Vagina (tissue), 2 donors: ENCODE measurements at regions of chr4 and their contacts with region 1.

Region 1: GRCh38 chr4:88706574-88706973 is 8.9 kb upstream of the NAP1L5 start:
- DNase-seq: no peak
- H3K4me3 ChIP-seq: no peak overlapping the region
- H3K27ac ChIP-seq: peak overlapping the region; percentile 34
- H3K4me1 ChIP-seq: peaks cover 16% of the 10 kb centered on the region
- H3K27me3 ChIP-seq: no peaks in the 10 kb centered on the region
- CTCF ChIP-seq: peak in 2 of 3 experiments; percentile 34 to 52
- POLR2A ChIP-seq: no peak

Region 2: DNA sequence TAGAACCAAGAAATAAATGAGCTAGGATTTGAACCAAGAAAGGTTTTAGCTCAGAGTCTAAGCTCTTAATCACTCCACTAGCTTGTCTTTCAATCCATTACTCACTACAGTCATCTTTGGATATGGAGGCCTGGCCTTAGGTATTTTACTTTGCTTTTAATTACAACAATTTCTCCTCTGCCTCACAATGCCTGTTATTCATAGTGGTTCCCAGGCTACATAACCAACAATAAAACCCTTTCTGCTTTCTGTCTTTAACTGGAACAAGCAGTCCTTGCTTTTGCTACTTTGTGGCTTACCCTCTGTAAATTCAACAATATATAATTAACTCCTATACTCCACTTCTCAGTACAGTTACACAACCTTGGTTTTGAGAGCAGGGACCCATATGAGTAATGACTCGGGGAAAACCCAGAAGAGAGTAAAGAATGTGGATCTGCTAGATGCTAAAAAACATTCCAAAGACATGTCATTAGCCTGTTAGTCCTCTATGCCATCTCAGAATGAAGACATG is 85.8 kb after region 1 on chr4:
- intact Hi-C with region 1: no loop called
- DNase-seq: no peak
- H3K4me3 ChIP-seq: no peak overlapping the region
- H3K27ac ChIP-seq: no peak overlapping the region
- H3K4me1 ChIP-seq: peaks cover 14% of the 10 kb centered on the region
- H3K27me3 ChIP-seq: no peaks in the 10 kb centered on the region
- CTCF ChIP-seq: no peak
- POLR2A ChIP-seq: no peak

Region 3: DNA sequence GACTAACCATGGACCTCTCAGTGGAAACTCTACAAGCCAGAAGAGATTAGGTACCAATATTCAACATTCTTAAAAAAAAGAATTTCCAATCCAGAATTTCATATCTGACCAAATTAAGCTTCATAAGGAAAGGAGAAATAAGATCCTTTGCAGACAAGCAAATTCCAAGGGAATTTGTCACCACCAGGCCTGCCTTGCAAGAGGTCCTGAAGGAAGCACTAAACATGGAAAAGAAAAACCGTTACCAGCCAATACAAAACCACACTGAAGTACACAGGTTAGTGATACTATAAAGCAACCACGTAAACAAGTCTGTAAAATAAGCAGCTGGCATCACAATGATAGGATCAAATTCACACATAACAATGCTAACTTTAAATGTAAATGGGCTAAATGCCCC is 193.9 kb after region 1 on chr4:
- intact Hi-C with region 1: no loop called
- DNase-seq: no peak
- H3K4me3 ChIP-seq: no peak overlapping the region
- H3K27ac ChIP-seq: no peak overlapping the region
- H3K4me1 ChIP-seq: no peaks in the 10 kb centered on the region
- H3K27me3 ChIP-seq: no peaks in the 10 kb centered on the region
- CTCF ChIP-seq: no peak
- POLR2A ChIP-seq: no peak

Region 4: DNA sequence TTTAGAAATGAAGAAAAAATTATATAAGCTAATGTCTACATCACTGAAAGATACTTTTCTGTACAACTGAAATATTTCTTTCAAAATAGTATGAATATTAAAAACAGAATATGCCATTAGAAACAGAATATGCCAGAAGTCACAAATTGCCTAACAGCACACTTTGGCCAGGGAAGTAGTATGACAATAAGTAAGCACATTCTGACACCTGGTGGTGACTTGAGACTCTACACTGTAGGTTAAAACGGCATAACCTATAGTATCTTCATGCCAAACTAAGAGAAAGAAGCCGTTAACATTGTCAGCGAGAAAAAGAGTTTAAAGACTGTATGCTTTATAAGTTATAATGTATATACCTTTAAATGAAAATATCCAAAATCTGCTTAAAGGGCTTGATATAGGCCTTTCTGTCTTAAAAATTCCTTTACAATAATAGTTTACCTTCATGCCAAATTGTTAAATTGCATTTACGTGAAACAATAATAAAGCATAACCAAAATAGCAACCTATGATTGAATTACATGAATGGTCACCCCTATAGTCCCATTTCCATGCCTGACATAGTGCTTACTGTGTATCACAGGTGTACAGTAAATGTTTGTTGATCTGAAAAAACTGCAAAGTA is 317.6 kb after region 1 on chr4:
- intact Hi-C with region 1: loop called (anchors 10 kb)
- DNase-seq: no peak
- H3K4me3 ChIP-seq: no peak overlapping the region
- H3K27ac ChIP-seq: no peak overlapping the region
- H3K4me1 ChIP-seq: no peaks in the 10 kb centered on the region
- H3K27me3 ChIP-seq: no peaks in the 10 kb centered on the region
- CTCF ChIP-seq: peak; percentile 70 to 97 (median 85)
- POLR2A ChIP-seq: no peak

Region 5: DNA sequence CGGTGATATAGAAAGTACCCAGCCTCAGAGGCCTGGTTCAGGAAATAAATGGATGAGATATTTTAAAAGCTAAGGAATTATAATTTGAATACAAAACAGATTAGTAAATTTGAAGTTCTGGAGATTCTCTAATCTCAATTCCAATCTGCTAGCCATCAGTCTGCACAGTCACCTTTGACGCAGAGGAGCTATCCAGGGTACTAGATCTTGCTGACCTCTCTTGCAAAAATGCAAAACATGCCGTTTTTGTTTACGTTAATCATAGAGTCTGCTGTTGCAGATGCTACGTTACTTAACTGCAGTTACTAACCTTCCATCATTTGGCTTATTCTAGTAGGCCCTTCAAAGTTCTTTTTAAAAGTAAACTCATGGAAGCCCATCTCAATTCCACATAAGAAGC is 1431.0 kb after region 1 on chr4:
- intact Hi-C with region 1: no loop called
- DNase-seq: no peak
- H3K4me3 ChIP-seq: no peak overlapping the region
- H3K27ac ChIP-seq: no peak overlapping the region
- H3K4me1 ChIP-seq: no peaks in the 10 kb centered on the region
- H3K27me3 ChIP-seq: no peaks in the 10 kb centered on the region
- CTCF ChIP-seq: no peak
- POLR2A ChIP-seq: no peak